Naive thymus-derived CD4-positive, alpha-beta T cell (primary cell): ENCODE measurements at regions of chr9 and their contacts with region 1.

Region 1: GRCh38 chr9:4984621-4985385 is at the start of gene JAK2:
- DNase-seq: peak; percentile 62 to 85 (median 72)
- ATAC-seq: peak; percentile 87
- H3K4me3 ChIP-seq: peak within 1 kb of the TSS; percentile 52
- H3K4me3 Mint-ChIP-seq: peak within 1 kb of the TSS; percentile 83 to 98 (median 94)
- H3K27ac ChIP-seq: peak within 1 kb of the TSS; percentile 78
- H3K27ac Mint-ChIP-seq: peak within 1 kb of the TSS; percentile 80 to 94 (median 90)
- H3K4me1 ChIP-seq: peaks cover 20 to 32% of the 10 kb centered on the region in 2 donors
- H3K4me1 Mint-ChIP-seq: peaks cover 20 to 41% (median 26%) of the 10 kb centered on the region in 7 donors
- H3K27me3 ChIP-seq: no peaks in the 10 kb centered on the region
- H3K27me3 Mint-ChIP-seq: no peaks in the 10 kb centered on the region
- total RNA-seq, gene JAK2: 11.7 to 76.0 (median 17.5) TPM

Region 2: GRCh38 chr9:4596165-4596922 is 388.5 kb before region 1 on chr9:
- CTCF ChIA-PET with region 1: no interaction called
- POLR2A ChIA-PET with region 1: no interaction called
- intact Hi-C with region 1: loop called (anchors 2 to 5 kb)
- DNase-seq: peak in 7 of 9 donors; percentile 81 to 94 (median 91)
- ATAC-seq: peak; percentile 95
- H3K4me3 ChIP-seq: peak overlapping the region; percentile 13
- H3K4me3 Mint-ChIP-seq: peak overlapping the region; percentile 29 to 80 (median 68)
- H3K27ac ChIP-seq: peak overlapping the region; percentile 74
- H3K27ac Mint-ChIP-seq: peak overlapping the region; percentile 58 to 99 (median 97)
- H3K4me1 ChIP-seq: peaks cover 30 to 53% of the 10 kb centered on the region in 2 donors
- H3K4me1 Mint-ChIP-seq: peaks cover 32 to 76% (median 60%) of the 10 kb centered on the region in 7 donors
- H3K27me3 ChIP-seq: no peaks in the 10 kb centered on the region
- H3K27me3 Mint-ChIP-seq: peaks cover 0 to 5% (median 0%) of the 10 kb centered on the region in 5 donors

Region 3: DNA sequence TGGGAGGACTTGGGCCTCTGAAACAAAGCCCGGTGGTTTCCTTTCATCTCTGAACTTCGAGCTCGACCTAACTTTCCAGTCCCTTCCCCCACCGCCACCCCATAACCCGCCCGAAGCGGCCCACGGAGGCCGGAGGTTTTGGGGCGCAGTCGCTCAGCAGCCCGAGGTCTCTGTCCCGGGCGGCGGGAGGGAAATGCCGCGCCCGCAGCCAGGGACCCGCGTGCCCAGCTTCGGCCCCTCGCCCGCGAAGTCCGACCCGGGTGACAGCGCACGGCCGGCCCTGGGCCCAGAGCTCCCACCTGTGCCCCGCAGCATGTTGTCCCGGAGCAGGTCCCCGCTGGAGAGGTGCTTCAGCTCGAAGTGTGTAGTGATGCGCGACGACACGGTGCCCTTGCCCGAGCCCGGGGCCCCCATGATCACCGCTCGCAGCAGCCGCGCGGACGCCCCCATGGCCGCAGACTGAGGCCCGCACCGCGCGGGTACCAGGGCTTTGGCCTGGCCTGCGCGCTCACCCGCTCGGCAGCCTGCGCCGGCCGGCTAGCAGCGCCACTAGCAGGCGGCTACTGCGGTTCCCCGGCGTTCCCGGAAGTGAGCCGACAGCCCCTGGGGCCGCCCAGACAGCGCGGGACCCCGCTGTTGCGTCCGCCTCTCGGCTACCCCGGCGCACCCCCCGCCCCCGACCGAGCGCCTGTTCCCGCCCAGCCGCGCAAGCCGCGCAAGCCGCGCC is 244.0 kb before region 1 on chr9 and contains the start of gene AK3:
- CTCF ChIA-PET with region 1: interaction called, 3 read pairs
- POLR2A ChIA-PET with region 1: no interaction called
- intact Hi-C with region 1: loop called (anchors 2 to 5 kb)
- DNase-seq: peak; percentile 72 to 85 (median 83)
- ATAC-seq: peak; percentile 95
- H3K4me3 ChIP-seq: peak within 1 kb of the TSS; percentile 73
- H3K4me3 Mint-ChIP-seq: peak within 1 kb of the TSS; percentile 88 to 99 (median 94)
- H3K27ac ChIP-seq: peak within 1 kb of the TSS; percentile 86
- H3K27ac Mint-ChIP-seq: peak within 1 kb of the TSS; percentile 86 to 98 (median 93)
- H3K4me1 ChIP-seq: peaks cover 10 to 16% of the 10 kb centered on the region in 2 donors
- H3K4me1 Mint-ChIP-seq: peaks cover 22 to 49% (median 40%) of the 10 kb centered on the region in 7 donors
- H3K27me3 ChIP-seq: no peaks in the 10 kb centered on the region
- H3K27me3 Mint-ChIP-seq: no peaks in the 10 kb centered on the region
- total RNA-seq, gene AK3: 18.0 to 34.8 (median 25.8) TPM

Region 4: GRCh38 chr9:4923580-4924544 is 60.9 kb before region 1 on chr9:
- CTCF ChIA-PET with region 1: interaction called, 5 read pairs
- POLR2A ChIA-PET with region 1: no interaction called
- intact Hi-C with region 1: loop called (anchors 1 to 2 kb)
- DNase-seq: peak in 5 of 9 donors; percentile 27 to 41 (median 31)
- ATAC-seq: peak; percentile 71
- H3K4me3 ChIP-seq: no peak overlapping the region
- H3K4me3 Mint-ChIP-seq: no peak overlapping the region
- H3K27ac ChIP-seq: no peak overlapping the region
- H3K27ac Mint-ChIP-seq: peak overlapping the region in 3 of 9 donors; percentile 12 to 76 (median 62)
- H3K4me1 ChIP-seq: no peaks in the 10 kb centered on the region
- H3K4me1 Mint-ChIP-seq: peaks cover 0 to 32% (median 4%) of the 10 kb centered on the region in 7 donors
- H3K27me3 ChIP-seq: no peaks in the 10 kb centered on the region
- H3K27me3 Mint-ChIP-seq: no peaks in the 10 kb centered on the region

Region 5: DNA sequence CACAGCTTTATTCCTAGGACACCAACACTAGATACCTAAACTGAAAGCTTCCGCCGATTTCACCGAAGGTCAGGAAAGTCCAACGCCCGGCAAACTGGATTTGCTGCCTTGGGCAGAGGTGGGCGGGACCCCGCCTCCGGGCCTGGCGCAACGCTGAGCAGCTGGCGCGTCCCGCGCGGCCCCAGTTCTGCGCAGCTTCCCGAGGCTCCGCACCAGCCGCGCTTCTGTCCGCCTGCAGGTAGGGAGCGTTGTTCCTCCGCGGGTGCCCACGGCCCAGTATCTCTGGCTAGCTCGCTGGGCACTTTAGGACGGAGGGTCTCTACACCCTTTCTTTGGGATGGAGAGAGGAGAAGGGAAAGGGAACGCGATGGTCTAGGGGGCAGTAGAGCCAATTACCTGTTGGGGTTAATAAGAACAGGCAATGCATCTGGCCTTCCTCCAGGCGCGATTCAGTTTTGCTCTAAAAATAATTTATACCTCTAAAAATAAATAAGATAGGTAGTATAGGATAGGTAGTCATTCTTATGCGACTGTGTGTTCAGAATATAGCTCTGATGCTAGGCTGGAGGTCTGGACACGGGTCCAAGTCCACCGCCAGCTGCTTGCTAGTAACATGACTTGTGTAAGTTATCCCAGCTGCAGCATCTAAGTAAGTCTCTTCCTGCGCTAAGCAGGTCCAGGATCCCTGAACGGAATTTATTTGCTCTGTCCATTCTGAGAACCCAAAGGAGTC is 465.7 kb after region 1 on chr9 and contains the start of gene CD274:
- CTCF ChIA-PET with region 1: interaction called, 3 read pairs
- POLR2A ChIA-PET with region 1: interaction called, 3 read pairs
- intact Hi-C with region 1: loop called in 1 of 2 experiments (anchors 5 kb)
- DNase-seq: peak; percentile 61 to 89 (median 80)
- ATAC-seq: peak; percentile 95
- H3K4me3 ChIP-seq: peak within 1 kb of the TSS; percentile 78
- H3K4me3 Mint-ChIP-seq: peak within 1 kb of the TSS; percentile 92 to 98 (median 95)
- H3K27ac ChIP-seq: peak within 1 kb of the TSS; percentile 94
- H3K27ac Mint-ChIP-seq: peak within 1 kb of the TSS; percentile 97 to 99 (median 98)
- H3K4me1 ChIP-seq: peaks cover 0 to 11% of the 10 kb centered on the region in 2 donors
- H3K4me1 Mint-ChIP-seq: peaks cover 33 to 69% (median 62%) of the 10 kb centered on the region in 7 donors
- H3K27me3 ChIP-seq: no peaks in the 10 kb centered on the region
- H3K27me3 Mint-ChIP-seq: no peaks in the 10 kb centered on the region
- total RNA-seq, gene CD274: 2.9 to 38.7 (median 7.8) TPM

Region 6: DNA sequence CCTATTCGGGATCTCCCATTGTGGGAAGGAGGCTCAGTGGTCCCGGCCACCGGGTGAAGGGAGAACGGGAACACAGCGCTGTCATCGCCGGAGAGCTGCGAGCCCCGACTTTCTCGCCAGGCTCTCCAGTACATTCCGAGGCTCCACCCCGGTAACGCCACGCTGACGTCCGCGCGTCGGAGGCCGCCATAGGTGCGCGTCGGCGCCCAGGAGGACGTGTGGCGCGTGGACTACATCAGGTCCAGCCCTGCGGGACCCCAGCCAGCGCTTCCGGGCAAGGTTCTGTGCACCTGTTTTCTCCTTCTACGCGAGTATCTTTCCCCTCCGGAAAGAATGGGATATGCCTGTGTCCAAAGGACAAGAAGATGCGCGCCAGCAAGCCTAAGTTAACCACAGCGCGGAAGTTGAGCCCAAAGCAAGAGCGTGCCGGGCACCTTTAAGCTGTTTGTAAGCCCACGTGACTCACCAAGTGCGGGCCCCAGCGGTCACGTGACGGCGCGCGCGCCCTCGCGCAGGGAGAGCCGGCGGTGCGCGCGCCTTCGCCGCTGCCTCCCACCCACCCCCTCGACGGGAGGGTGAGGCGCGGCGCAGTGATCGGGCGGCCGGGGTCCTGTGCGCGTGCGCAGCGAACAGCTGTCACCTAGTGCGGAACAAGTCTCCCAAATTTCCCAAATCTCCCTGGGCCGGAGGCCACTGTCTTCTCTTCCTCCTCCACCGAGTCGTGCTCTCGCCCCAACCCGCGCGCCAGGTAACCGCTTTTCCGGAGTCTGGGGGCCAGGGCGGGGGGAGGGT is 1772.8 kb after region 1 on chr9 and contains the start of gene KDM4C:
- CTCF ChIA-PET with region 1: no interaction called
- POLR2A ChIA-PET with region 1: no interaction called
- intact Hi-C with region 1: loop called in 1 of 2 experiments (anchors 5 kb)
- DNase-seq: peak; percentile 92 to 97 (median 94)
- ATAC-seq: peak; percentile 87
- H3K4me3 ChIP-seq: peak within 1 kb of the TSS; percentile 71
- H3K4me3 Mint-ChIP-seq: peak within 1 kb of the TSS; percentile 89 to 99 (median 96)
- H3K27ac ChIP-seq: peak within 1 kb of the TSS; percentile 98
- H3K27ac Mint-ChIP-seq: peak within 1 kb of the TSS; percentile 98 to 100 (median 100)
- H3K4me1 ChIP-seq: peaks cover 9 to 12% of the 10 kb centered on the region in 2 donors
- H3K4me1 Mint-ChIP-seq: peaks cover 12 to 41% (median 26%) of the 10 kb centered on the region in 7 donors
- H3K27me3 ChIP-seq: no peaks in the 10 kb centered on the region
- H3K27me3 Mint-ChIP-seq: no peaks in the 10 kb centered on the region
- total RNA-seq, gene KDM4C: 68.6 to 100 (median 93.3) TPM